ENCODE measurements at regions of chr1 and their contacts with region 1.

Region 1: GRCh38 chr1:225911191-225912130 is 12.6 kb downstream of the PYCR2 start:
- DNase-seq: peak; percentile 69 to 78 (median 72)
- ATAC-seq: peak; percentile 88 to 96 (median 91)
- H3K4me3 ChIP-seq: peak overlapping the region in 1 of 3 donors; percentile 20
- H3K27ac ChIP-seq: no peak overlapping the region
- H3K4me1 ChIP-seq: peaks cover 0 to 8% (median 2%) of the 10 kb centered on the region in 4 donors
- H3K27me3 ChIP-seq: no peaks in the 10 kb centered on the region
- CTCF ChIP-seq: peak; percentile 87 to 99 (median 96)
- POLR2A ChIP-seq: no peak

Region 2: GRCh38 chr1:225834417-225835329 is 76.8 kb before region 1 on chr1:
- intact Hi-C with region 1: no loop called
- DNase-seq: peak in 1 of 3 donors; percentile 30
- ATAC-seq: peak; percentile 57 to 84 (median 74)
- H3K4me3 ChIP-seq: no peak overlapping the region
- H3K27ac ChIP-seq: peak overlapping the region in 1 of 3 donors; percentile 6
- H3K4me1 ChIP-seq: peaks cover 0 to 70% (median 6%) of the 10 kb centered on the region in 4 donors
- H3K27me3 ChIP-seq: no peaks in the 10 kb centered on the region
- CTCF ChIP-seq: no peak
- POLR2A ChIP-seq: no peak

Region 3: DNA sequence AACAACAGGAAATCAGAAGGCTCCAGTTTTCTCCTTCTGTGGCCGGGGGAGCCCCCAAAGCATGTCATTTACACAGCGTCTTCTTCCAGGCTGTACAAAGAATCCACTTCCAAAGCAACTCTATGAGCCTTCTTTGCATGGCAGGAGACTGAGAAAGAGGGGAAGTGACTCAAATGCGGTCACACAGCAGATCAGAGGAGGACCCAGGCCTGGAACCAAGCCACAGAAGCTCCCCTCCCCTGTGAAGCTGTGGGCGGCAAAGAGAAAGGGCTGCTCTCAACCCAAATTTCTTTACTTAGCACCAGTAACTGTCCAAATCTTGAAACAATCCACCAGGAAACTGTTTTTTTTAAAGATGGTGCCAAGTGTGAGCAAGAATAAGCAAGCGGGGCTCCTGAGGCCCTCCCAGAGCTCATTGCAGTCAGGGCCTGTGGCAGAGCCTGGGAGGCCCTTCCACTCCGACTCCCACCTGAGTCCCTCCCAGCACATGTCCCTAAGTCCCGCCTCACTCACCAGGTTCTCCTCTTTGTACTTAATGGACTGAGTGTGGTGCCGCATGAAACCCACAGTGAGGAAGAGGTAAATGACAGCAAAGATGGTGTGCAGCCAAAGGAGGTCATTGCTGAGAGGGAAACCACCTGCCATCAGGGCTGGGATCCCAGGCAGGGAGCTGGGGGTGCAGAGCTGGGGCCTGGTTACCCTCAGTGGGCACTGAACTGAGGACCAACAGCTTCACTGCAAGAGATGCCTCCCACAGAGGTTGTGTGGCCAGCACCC is 45.2 kb before region 1 on chr1:
- intact Hi-C with region 1: loop called in 1 of 2 experiments (anchors 10 kb)
- DNase-seq: peak in 1 of 3 donors; percentile 26
- ATAC-seq: peak in 3 of 4 donors; percentile 6 to 48 (median 32)
- H3K4me3 ChIP-seq: no peak overlapping the region
- H3K27ac ChIP-seq: no peak overlapping the region
- H3K4me1 ChIP-seq: no peaks in the 10 kb centered on the region
- H3K27me3 ChIP-seq: no peaks in the 10 kb centered on the region
- CTCF ChIP-seq: no peak
- POLR2A ChIP-seq: no peak

Region 4: DNA sequence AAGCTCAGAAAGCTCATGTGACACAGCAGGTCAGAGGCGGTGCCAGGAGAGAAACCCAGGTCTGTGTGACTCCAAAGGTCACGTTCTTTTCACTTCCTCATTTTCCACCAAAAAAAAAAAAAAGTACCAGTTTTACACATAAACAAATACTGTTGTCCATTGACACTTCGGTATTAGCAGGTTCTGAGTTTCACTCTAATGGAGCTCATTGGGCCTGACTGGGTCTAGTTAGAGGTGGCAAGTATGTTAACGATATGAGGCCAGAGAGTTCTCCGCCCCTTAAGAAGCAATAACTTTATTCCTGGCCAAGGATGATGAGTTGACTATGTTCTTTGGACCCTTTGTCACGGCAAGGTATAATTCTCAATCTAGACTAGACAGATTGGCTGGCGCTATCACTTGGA is 117.6 kb after region 1 on chr1:
- intact Hi-C with region 1: no loop called
- DNase-seq: peak; percentile 68 to 79 (median 77)
- ATAC-seq: peak; percentile 86 to 93 (median 88)
- H3K4me3 ChIP-seq: peak overlapping the region in 1 of 3 donors; percentile 11
- H3K27ac ChIP-seq: peak overlapping the region; percentile 59 to 73 (median 64)
- H3K4me1 ChIP-seq: peaks cover 0 to 15% (median 0%) of the 10 kb centered on the region in 4 donors
- H3K27me3 ChIP-seq: no peaks in the 10 kb centered on the region
- CTCF ChIP-seq: no peak
- POLR2A ChIP-seq: peak; percentile 14

Measured in right lobe of liver (tissue), 6 donors.